CD8-positive, alpha-beta memory T cell (primary cell): ENCODE measurements at regions of chr17 and their contacts with region 1.

Region 1: DNA sequence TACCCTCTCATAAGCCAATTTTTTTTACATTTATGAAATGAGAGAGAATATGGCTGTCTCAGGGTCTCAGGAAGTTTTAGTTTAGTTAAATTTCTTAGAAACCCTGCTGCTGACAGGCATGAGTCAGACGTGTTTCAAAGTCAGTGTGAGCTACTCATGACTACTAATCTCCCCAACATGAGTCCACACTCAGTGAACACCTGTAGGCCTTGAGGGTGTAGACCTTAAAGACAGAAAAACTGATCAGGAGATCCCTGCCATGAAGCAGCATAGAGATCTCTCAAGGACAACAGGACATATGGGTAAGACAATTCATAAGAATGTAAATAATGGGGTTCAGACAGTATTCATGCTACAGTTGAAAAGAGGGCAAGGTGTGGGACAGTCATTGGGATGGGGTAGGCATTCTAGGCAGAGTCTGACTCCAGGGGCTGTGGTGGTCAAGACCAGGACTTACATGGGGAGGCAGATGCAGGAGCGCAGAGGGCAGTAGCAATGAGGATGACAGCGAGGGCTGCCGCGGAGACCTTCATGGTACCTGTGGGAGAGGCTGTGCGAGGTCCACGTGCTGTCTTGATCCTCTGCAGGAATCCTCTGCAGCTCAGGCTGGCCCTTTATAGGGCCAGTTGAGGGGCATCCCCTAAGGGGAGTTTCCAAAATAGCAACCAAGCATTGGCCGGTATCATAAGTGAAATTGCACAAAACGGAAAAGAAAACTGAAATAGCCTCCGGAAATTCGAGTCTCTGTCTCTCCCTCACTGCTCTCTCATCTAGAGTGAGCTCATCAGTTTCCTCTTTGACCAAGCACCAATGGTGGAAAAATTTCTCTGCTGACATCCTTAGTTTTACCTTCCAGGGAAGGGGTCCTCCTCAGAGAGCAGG is at the start of gene CCL5:
- DNase-seq: peak in 4 of 5 donors; percentile 71 to 92 (median 78)
- H3K4me3 ChIP-seq: peak within 1 kb of the TSS; percentile 76
- H3K4me3 Mint-ChIP-seq: peak within 1 kb of the TSS; percentile 92 to 99 (median 97)
- H3K27ac ChIP-seq: peak within 1 kb of the TSS; percentile 84
- H3K27ac Mint-ChIP-seq: peak within 1 kb of the TSS; percentile 89 to 98 (median 92)
- H3K4me1 ChIP-seq: peaks cover 27% of the 10 kb centered on the region
- H3K4me1 Mint-ChIP-seq: peaks cover 45 to 57% (median 56%) of the 10 kb centered on the region in 3 donors
- H3K27me3 ChIP-seq: no peaks in the 10 kb centered on the region
- H3K27me3 Mint-ChIP-seq: no peaks in the 10 kb centered on the region
- total RNA-seq, gene CCL5: 580 to 591 TPM

Region 2: GRCh38 chr17:35889818-35890763 is 10.1 kb after region 1 on chr17:
- CTCF ChIA-PET with region 1: interaction called, 144 read pairs
- POLR2A ChIA-PET with region 1: interaction called, 100 read pairs
- DNase-seq: peak in 2 of 5 donors; percentile 36 to 53
- H3K4me3 ChIP-seq: no peak overlapping the region
- H3K4me3 Mint-ChIP-seq: peak overlapping the region; percentile 52 to 88 (median 72)
- H3K27ac ChIP-seq: peak overlapping the region; percentile 20
- H3K27ac Mint-ChIP-seq: peak overlapping the region; percentile 74 to 98 (median 96)
- H3K4me1 ChIP-seq: peaks cover 54% of the 10 kb centered on the region
- H3K4me1 Mint-ChIP-seq: peaks cover 68 to 85% (median 78%) of the 10 kb centered on the region in 3 donors
- H3K27me3 ChIP-seq: no peaks in the 10 kb centered on the region
- H3K27me3 Mint-ChIP-seq: peaks cover 0 to 4% of the 10 kb centered on the region in 2 donors

Region 3: GRCh38 chr17:35898283-35899070 is 18.5 kb after region 1 on chr17:
- CTCF ChIA-PET with region 1: interaction called, 144 read pairs
- POLR2A ChIA-PET with region 1: interaction called, 100 read pairs
- DNase-seq: peak in 3 of 5 donors; percentile 22 to 83 (median 56)
- H3K4me3 ChIP-seq: no peak overlapping the region
- H3K4me3 Mint-ChIP-seq: peak overlapping the region; percentile 15 to 84 (median 72)
- H3K27ac ChIP-seq: no peak overlapping the region
- H3K27ac Mint-ChIP-seq: peak overlapping the region; percentile 82 to 97 (median 92)
- H3K4me1 ChIP-seq: peaks cover 74% of the 10 kb centered on the region
- H3K4me1 Mint-ChIP-seq: peaks cover 76 to 94% (median 92%) of the 10 kb centered on the region in 3 donors
- H3K27me3 ChIP-seq: no peaks in the 10 kb centered on the region
- H3K27me3 Mint-ChIP-seq: no peaks in the 10 kb centered on the region

Region 4: DNA sequence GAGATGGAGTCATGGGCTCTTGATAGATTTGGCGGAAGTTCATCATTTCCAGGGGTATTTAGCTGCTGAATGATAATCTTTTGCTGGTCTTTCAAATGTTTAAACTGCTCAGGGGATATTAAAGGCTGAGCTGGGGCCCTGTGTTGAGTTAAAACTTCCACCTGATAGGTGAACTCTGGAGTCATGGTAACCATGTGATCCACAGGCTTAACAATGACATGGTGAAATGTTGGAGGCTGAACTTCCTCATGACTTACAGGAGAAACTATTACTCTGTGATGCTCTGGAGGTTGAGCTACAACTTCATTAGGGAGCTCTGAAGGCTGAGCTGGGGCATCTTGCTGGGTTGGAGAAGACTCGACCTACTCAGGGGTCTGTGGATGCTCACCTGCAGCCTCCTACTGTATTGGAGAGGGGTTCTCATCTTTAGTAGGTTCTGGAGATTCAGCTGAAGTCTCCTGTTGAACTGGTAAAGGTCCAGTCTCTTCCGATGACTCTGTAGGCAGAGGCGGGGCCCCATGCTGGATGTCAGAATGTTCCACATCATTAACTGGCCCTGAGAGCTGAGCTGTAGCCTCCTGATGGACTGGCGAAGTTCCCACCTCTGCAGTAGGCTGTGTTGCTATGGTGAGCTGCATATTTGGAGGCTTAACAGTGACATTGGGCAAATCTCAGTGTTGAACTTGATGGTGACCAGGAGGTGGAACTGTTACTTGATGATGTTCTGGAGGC is 26.3 kb after region 1 on chr17:
- CTCF ChIA-PET with region 1: interaction called, 32 read pairs
- POLR2A ChIA-PET with region 1: interaction called, 100 read pairs
- DNase-seq: no peak
- H3K4me3 ChIP-seq: no peak overlapping the region
- H3K4me3 Mint-ChIP-seq: peak overlapping the region in 2 of 7 donors; percentile 9 to 43
- H3K27ac ChIP-seq: no peak overlapping the region
- H3K27ac Mint-ChIP-seq: peak overlapping the region in 4 of 8 donors; percentile 38 to 66 (median 63)
- H3K4me1 ChIP-seq: peaks cover 15% of the 10 kb centered on the region
- H3K4me1 Mint-ChIP-seq: peaks cover 62 to 94% (median 78%) of the 10 kb centered on the region in 3 donors
- H3K27me3 ChIP-seq: no peaks in the 10 kb centered on the region
- H3K27me3 Mint-ChIP-seq: no peaks in the 10 kb centered on the region

Region 5: GRCh38 chr17:35930211-35931065 is 50.4 kb after region 1 on chr17 and contains the start of gene RDM1:
- CTCF ChIA-PET with region 1: interaction called, 8 read pairs
- POLR2A ChIA-PET with region 1: interaction called, 10 read pairs
- DNase-seq: peak; percentile 67 to 89 (median 73)
- H3K4me3 ChIP-seq: peak within 1 kb of the TSS; percentile 74
- H3K4me3 Mint-ChIP-seq: peak within 1 kb of the TSS; percentile 85 to 93 (median 87)
- H3K27ac ChIP-seq: no peak within 1 kb of the TSS
- H3K27ac Mint-ChIP-seq: peak within 1 kb of the TSS; percentile 34 to 79 (median 66)
- H3K4me1 ChIP-seq: peaks cover 6% of the 10 kb centered on the region
- H3K4me1 Mint-ChIP-seq: peaks cover 22 to 35% (median 26%) of the 10 kb centered on the region in 3 donors
- H3K27me3 ChIP-seq: no peaks in the 10 kb centered on the region
- H3K27me3 Mint-ChIP-seq: no peaks in the 10 kb centered on the region
- total RNA-seq, gene RDM1: 2.5 to 3.1 TPM

Region 6: GRCh38 chr17:35963663-35964062 is 83.6 kb after region 1 on chr17:
- CTCF ChIA-PET with region 1: no interaction called
- POLR2A ChIA-PET with region 1: no interaction called
- DNase-seq: no peak
- H3K4me3 ChIP-seq: no peak overlapping the region
- H3K4me3 Mint-ChIP-seq: no peak overlapping the region
- H3K27ac ChIP-seq: no peak overlapping the region
- H3K27ac Mint-ChIP-seq: no peak overlapping the region
- H3K4me1 ChIP-seq: no peaks in the 10 kb centered on the region
- H3K4me1 Mint-ChIP-seq: peaks cover 0 to 2% (median 0%) of the 10 kb centered on the region in 3 donors
- H3K27me3 ChIP-seq: no peaks in the 10 kb centered on the region
- H3K27me3 Mint-ChIP-seq: peaks cover 0 to under 1% of the 10 kb centered on the region in 2 donors

Region 7: DNA sequence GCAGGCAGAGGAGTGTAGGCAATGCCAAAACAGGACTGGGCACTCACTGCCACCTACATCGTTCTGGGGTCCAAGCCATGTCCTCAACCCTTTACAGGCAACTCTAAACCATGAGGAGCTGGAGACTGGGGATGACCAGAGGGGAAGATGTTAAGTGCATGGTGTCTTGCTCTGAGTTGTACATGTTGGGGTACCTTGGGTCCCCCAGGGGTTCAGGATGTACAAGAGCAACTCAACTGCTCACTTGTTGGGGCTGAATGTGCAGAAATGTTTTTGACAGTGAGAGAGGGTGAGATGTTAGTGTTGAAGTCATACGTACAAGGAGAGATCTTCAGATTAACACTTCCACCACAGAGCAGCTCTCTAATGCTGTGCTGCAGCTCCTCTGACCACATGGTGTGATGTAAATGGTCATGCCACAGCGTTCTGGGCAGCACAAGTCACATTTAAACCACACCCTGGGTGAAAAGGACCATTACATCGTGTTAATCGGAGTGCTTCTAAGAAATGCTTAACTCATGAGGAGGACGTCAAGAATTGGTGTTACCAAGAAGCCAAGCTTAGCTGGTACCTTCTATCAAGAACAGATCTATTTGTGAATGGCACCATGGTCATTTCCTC is 186.5 kb after region 1 on chr17:
- CTCF ChIA-PET with region 1: no interaction called
- POLR2A ChIA-PET with region 1: no interaction called
- DNase-seq: peak in 3 of 5 donors; percentile 36 to 73 (median 69)
- H3K4me3 ChIP-seq: no peak overlapping the region
- H3K4me3 Mint-ChIP-seq: peak overlapping the region in 5 of 7 donors; percentile 5 to 57 (median 36)
- H3K27ac ChIP-seq: peak overlapping the region; percentile 18
- H3K27ac Mint-ChIP-seq: peak overlapping the region; percentile 62 to 91 (median 80)
- H3K4me1 ChIP-seq: peaks cover 38% of the 10 kb centered on the region
- H3K4me1 Mint-ChIP-seq: peaks cover 44 to 54% (median 53%) of the 10 kb centered on the region in 3 donors
- H3K27me3 ChIP-seq: no peaks in the 10 kb centered on the region
- H3K27me3 Mint-ChIP-seq: peaks cover 0 to under 1% of the 10 kb centered on the region in 2 donors